ENCODE measurements at regions of chr4 and their contacts with region 1.

Region 1: GRCh38 chr4:67909905-67910584 is 26.2 kb upstream of the TMPRSS11D start:
- H3K4me3 Mint-ChIP-seq: no peak overlapping the region
- H3K27ac Mint-ChIP-seq: no peak overlapping the region
- H3K4me1 Mint-ChIP-seq: no peaks in the 10 kb centered on the region
- H3K27me3 Mint-ChIP-seq: no peaks in the 10 kb centered on the region

Region 2: GRCh38 chr4:67746797-67747495 is 163.1 kb before region 1 on chr4:
- intact Hi-C with region 1: loop called (anchors 5 kb)
- H3K4me3 Mint-ChIP-seq: no peak overlapping the region
- H3K27ac Mint-ChIP-seq: no peak overlapping the region
- H3K4me1 Mint-ChIP-seq: no peaks in the 10 kb centered on the region
- H3K27me3 Mint-ChIP-seq: no peaks in the 10 kb centered on the region

Region 3: DNA sequence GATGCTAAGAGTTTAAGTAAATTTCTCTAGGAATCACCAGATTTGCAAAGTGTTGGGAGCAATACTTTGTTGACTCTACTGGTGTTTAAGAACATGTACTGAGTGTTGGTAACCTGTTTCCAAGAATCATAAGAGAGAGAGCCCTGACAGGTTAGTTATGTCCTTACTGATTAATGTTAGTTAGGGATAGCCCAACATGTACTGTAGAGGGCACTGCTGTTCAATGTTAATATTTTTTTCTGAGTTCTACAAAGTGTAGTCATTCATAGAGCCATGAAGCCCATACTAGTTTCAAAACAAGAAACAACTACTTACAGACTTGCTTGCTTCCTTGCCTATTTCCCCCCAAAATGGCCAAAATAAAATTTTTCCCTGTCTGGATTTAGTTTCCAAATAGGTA is 38.2 kb before region 1 on chr4:
- intact Hi-C with region 1: loop called (anchors 1 kb)
- H3K4me3 Mint-ChIP-seq: no peak overlapping the region
- H3K27ac Mint-ChIP-seq: no peak overlapping the region
- H3K4me1 Mint-ChIP-seq: no peaks in the 10 kb centered on the region
- H3K27me3 Mint-ChIP-seq: no peaks in the 10 kb centered on the region